PC-9 (cell line): ENCODE measurements at regions of chr2 and their contacts with region 1.

Region 1: GRCh38 chr2:38423763-38424162 is 46.7 kb upstream of the ATL2 start:
- DNase-seq: no peak
- H3K4me3 ChIP-seq: no peak overlapping the region
- H3K27ac ChIP-seq: no peak overlapping the region
- H3K4me1 ChIP-seq: no peaks in the 10 kb centered on the region
- H3K27me3 ChIP-seq: no peaks in the 10 kb centered on the region
- CTCF ChIP-seq: no peak

Region 2: DNA sequence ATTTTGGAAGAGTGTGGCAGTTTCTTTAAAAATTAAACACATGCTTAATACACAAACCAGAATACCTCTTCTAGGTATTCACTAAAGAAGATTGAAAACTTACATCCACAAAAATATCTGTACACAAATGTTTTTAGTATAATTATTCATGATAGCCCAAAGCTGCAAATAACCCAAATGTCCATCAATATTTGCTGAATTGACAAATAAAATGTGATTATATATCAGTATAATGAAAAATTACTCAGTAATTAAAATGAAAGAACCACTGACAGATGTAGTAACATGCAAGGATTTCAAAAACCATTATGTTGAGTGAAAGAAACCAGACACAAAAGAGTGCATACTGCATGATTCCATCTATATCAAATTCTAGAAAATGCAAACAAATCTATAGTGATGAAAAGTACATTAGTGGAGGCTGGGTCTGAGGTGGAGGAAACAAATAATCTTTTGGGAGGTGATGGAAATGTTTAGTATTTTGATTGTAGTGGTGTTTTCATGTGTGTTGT is 984.6 kb before region 1 on chr2:
- CTCF ChIA-PET with region 1: no interaction called
- POLR2A ChIA-PET with region 1: interaction called, 10 read pairs
- intact Hi-C with region 1: no loop called
- DNase-seq: no peak
- H3K4me3 ChIP-seq: no peak overlapping the region
- H3K27ac ChIP-seq: no peak overlapping the region
- H3K4me1 ChIP-seq: no peaks in the 10 kb centered on the region
- H3K27me3 ChIP-seq: no peaks in the 10 kb centered on the region
- CTCF ChIP-seq: no peak